Heart right ventricle (tissue), 16 donors: ENCODE measurements at regions of chr17 and their contacts with region 1.

Region 1: DNA sequence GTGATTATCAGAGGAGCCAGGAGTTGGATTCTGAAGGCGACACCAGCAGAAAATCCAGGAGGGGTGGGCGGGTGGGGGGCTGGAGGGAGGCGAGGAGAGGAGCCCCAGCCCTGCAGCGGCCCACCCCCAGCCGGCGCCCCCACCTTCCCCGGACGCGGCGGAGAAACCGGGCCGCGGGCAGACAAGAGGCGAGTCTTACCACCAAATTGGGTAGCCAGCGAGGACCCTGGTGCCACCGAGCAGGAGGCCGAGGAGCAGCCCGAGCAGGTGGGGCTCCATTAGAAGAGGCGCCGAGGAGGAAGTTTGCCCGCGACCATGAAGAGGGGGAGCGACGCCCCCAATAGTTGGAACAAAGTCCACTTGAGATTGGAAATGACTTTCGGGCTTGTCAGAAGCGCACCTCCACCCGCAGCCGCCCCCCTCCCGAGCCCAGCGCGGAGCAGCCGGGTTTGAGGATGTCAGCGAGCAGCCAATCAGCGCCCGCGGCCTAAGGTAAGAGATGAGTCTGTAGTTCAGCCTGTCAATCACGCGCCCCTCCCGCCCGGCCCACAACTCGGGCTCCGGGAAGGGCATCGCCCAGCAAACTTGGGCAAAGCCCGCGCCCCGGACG is at the start of gene WNT3:
- DNase-seq: no peak
- ATAC-seq: no peak
- H3K4me3 ChIP-seq: peak within 1 kb of the TSS; percentile 13 to 49 (median 44)
- H3K27ac ChIP-seq: no peak within 1 kb of the TSS
- H3K4me1 ChIP-seq: peaks cover 9 to 27% (median 21%) of the 10 kb centered on the region in 9 donors
- H3K27me3 ChIP-seq: peaks cover 28 to 98% (median 91%) of the 10 kb centered on the region in 7 donors
- CTCF ChIP-seq: no peak
- total RNA-seq, gene WNT3: 0.83 to 3.7 (median 1.5) TPM

Region 2: DNA sequence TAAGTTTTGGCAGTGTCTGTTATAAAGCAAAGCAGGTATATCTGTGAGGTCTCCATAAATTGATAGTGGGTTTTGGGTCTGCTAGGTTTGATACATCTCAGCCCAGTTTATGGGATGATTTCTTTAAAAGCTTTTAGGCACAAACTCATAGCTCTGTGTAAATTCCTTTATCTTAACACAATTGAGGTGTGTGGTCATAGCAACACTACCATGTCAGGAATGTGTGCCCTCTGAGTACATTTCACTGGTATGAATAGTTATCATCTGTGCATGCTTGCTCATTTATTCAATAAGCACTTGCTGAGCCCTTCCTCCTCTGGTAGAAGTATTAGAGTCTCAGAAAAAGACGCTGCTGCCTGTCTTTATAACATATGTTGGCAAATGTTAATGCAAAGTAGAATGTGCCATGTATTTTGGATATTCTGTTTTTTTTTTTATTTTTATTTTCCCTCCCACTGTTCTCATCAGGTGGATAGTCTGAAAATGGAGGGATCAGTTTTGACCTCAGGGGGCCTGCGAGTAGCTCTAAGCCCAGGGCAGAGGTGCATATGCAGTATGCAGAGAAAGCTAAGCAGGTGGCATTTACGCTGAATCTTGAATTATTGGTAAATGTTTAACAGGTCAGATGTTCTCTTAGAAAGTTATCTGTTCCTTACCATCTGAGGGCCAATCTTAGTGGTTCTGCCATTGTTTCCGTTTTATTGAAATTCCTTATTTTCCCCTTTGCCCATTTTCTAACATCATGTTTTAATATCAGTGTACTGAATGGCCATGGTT is 90.7 kb before region 1 on chr17:
- intact Hi-C with region 1: loop called in 2 of 10 experiments (anchors 10 kb)
- DNase-seq: no peak
- ATAC-seq: no peak
- H3K4me3 ChIP-seq: no peak overlapping the region
- H3K27ac ChIP-seq: no peak overlapping the region
- H3K4me1 ChIP-seq: no peaks in the 10 kb centered on the region
- H3K27me3 ChIP-seq: no peaks in the 10 kb centered on the region
- CTCF ChIP-seq: no peak

Region 3: DNA sequence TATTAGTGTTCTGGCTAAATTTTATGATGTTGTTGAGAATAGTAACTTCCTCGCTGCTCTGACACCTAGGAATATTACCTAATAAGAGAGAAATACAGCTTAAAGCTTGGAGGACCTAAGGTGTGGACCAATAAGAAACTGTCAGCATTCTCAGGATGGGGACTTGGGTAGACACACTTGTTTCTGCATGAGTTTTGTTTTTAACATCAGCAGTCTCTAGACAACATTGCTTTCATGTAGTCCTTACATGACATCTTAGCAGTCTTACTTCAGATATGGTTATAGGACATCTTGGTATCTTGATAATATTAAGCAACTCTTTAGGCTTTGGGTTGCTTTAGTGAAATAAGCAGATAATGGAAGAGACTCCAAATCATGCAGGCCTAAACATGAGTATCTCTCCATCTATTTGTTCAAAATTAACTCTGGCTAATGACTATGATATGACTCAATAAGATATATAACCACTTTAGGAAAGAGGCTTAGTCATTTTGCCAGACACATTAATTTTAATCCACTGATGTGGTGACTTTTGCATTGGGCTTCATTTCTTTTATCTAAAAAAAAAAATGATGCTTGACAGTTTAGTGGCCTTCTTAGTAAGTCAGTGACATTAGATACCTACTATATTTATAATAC is 84.5 kb before region 1 on chr17:
- intact Hi-C with region 1: loop called in 2 of 10 experiments (anchors 10 kb)
- DNase-seq: no peak
- ATAC-seq: no peak
- H3K4me3 ChIP-seq: no peak overlapping the region
- H3K27ac ChIP-seq: no peak overlapping the region
- H3K4me1 ChIP-seq: peaks cover 0 to 6% (median 0%) of the 10 kb centered on the region in 9 donors
- H3K27me3 ChIP-seq: no peaks in the 10 kb centered on the region
- CTCF ChIP-seq: no peak